Head of caudate nucleus (tissue), 42 donors: ENCODE measurements at regions of chr4 and their contacts with region 1.

Region 1: DNA sequence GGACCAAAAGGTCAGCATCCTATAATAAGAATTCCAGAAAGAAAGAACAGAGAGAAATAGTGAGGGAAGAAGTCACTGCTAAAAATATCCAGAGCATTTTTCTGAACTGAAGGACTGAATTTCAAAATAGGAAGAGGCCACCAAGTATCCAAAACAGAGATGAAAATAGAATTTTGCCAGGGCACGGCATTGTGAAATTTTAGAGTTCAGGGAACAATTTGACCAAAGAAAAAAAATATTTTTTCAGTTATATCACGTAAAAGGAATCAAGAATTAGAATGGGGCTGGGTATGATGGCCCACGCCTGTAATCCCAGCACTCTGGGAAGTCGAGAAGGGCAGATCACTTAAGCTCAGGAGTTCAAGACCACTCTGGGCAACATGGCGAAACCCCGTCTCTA is 65.4 kb downstream of the FGFBP1 start:
- DNase-seq: no peak

Region 2: DNA sequence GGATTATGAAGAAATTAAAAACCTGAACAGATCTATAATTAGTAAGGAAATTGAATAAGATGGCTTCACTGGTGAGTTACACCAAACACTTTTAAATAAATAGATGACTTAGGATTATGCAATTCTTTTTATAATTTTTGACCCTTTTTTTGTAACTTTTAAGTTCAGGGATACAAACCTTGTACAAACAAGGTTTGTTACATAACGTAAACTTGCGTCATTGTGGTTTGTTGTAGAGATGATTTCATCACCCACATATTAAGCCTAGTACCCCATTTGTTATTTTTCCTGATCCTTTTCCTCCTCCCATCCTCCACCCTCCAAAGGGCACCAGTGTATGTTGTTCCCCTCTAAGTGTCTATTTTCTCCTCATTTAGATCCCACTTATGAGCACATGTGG is 795.1 kb before region 1 on chr4:
- intact Hi-C with region 1: no loop called
- DNase-seq: no peak

Region 3: GRCh38 chr4:15488658-15489470 is 384.3 kb before region 1 on chr4:
- intact Hi-C with region 1: loop called (anchors 10 kb)
- DNase-seq: no peak

Region 4: DNA sequence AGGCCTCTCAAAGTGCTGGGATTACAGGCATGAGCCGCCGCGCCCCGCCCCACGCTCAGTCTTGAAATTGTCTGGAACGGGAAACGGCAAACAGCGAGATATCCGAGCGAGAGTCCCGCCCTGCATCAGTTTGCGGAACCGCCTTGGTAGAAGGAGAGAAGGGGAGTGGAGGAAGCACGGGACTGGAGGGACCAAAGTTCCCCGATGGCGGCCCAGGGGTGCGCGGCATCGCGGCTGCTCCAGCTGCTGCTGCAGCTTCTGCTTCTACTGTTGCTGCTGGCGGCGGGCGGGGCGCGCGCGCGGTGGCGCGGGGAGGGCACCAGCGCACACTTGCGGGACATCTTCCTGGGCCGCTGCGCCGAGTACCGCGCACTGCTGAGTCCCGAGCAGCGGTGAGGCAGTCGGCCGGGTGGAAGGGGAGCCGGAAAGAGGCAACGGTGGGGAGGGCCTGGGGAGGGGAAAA is 170.1 kb before region 1 on chr4 and contains the start of gene BST1:
- intact Hi-C with region 1: no loop called
- DNase-seq: peak; percentile 9 to 85 (median 69)

Region 5: GRCh38 chr4:15765910-15766697 is 107.0 kb before region 1 on chr4:
- intact Hi-C with region 1: no loop called
- DNase-seq: no peak